ENCODE measurements at regions of chr1 and their contacts with region 1.

Region 1: GRCh38 chr1:197761621-197762020 is 13.7 kb downstream of the DENND1B start:
- DNase-seq: no peak
- ATAC-seq: no peak
- H3K4me3 ChIP-seq: no peak overlapping the region
- H3K27ac ChIP-seq: no peak overlapping the region
- H3K4me1 ChIP-seq: peaks cover 19% of the 10 kb centered on the region
- H3K27me3 ChIP-seq: no peaks in the 10 kb centered on the region
- CTCF ChIP-seq: no peak

Region 2: DNA sequence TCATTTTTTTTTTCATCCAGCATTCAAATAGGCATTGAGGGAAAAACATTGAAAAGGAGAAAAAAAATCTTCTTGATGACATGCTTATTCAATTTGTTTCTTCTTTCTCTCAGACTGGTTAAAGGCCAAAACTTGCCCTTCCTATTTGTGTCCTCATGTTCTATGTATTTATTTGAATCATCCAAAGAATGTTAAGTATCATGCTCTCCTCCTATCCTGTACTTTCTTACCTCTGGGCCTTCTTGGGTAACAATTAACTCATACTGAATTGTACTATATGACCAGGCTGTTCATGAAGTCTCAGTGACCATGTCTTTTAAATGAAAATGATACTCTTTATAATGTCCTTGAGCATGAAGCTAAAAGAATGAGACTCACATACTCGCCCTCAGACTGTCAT is 50.1 kb after region 1 on chr1:
- intact Hi-C with region 1: loop called in 1 of 2 experiments (anchors 2 kb)
- DNase-seq: no peak
- ATAC-seq: no peak
- H3K4me3 ChIP-seq: no peak overlapping the region
- H3K27ac ChIP-seq: no peak overlapping the region
- H3K4me1 ChIP-seq: no peaks in the 10 kb centered on the region
- H3K27me3 ChIP-seq: peaks cover 0 to 4% (median 0%) of the 10 kb centered on the region in 3 donors
- CTCF ChIP-seq: no peak

Region 3: DNA sequence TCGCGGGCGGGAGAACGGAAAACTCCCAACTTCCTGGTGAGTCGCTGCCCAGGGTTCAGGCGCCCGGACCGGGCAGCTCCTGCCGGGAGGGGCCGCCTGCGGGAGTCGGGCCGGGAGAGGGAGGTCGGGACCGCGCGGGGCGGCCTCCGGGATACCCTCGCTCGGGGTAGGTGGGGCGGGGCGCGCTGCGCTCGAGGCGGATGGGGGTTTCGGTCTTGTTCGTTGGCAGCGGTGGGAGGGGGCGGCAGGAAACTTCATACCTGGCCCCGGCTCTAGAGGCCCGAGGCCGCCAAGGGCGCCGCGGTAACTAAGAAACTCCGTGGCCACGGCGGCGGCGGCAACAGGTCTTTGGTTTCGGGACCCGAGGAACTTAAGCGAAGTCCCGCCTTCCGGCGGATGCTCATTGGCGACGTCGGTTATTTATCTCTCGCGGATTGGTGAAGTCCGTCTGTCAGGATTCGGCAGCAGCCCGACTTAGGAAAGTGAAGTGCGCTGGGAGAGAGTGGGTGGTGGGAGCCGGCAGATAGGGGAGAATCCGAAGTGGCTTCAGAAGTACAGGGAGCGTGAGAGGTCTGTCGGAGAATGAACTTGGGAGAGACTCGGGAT is 395.7 kb after region 1 on chr1:
- intact Hi-C with region 1: no loop called
- DNase-seq: peak; percentile 84 to 91
- ATAC-seq: peak; percentile 65 to 75 (median 67)
- H3K4me3 ChIP-seq: peak overlapping the region; percentile 83
- H3K27ac ChIP-seq: peak overlapping the region; percentile 94
- H3K4me1 ChIP-seq: peaks cover 55% of the 10 kb centered on the region
- H3K27me3 ChIP-seq: no peaks in the 10 kb centered on the region
- CTCF ChIP-seq: no peak